Body of pancreas (tissue), 4 donors: ENCODE measurements at regions of chr16 and their contacts with region 1.

Region 1: DNA sequence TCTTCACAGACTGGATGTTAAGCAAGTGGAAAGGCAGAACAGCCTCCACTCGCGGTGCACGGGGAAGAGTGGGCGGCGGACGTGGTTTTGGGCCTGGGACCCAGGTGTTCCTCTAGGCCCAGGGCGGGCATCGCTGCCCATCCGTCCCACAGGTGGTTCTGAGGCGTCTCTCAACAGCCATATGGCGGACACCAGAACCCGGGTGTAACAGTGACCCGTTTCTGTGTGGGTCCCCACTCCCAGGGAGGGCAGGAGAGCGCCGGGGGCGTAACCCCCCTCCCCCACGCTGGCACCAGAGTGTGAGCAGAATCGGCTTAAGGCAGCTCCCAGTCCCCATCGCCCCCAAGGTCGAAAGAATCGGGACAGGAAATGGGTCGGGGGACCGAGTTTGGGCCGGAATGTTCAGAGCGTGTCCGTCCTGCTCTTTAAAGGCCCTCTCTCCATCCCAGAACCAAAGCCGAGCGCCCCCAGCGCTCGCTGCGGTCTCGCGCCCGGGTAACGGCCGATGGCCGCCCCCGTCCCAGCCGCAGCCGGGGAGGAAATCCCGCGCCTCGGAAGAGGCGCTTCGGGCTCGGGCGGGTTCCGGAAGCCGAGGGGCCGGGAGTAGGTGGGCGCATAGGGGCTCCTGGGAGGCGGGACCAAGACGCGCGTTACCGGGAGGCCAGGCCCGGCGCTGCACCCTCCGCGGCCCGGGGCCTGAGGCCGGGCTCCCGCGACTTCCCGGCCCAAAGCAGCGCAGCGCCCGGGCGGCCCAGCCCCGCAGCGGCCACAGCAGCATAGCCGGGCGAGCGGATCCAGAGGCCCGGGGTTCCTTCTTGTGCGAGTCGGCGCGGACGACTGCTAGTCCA is at the start of gene TK2:
- DNase-seq: peak; percentile 73 to 81 (median 77)
- ATAC-seq: peak; percentile 63
- H3K4me3 ChIP-seq: peak within 1 kb of the TSS; percentile 56 to 70
- H3K27ac ChIP-seq: peak within 1 kb of the TSS; percentile 72 to 98 (median 94)
- H3K4me1 ChIP-seq: peaks cover 47% of the 10 kb centered on the region
- H3K27me3 ChIP-seq: no peaks in the 10 kb centered on the region
- CTCF ChIP-seq: peak in 5 of 7 experiments; percentile 15 to 25 (median 18)
- POLR2A ChIP-seq: peak; percentile 80 to 83 (median 83)
- total RNA-seq, gene TK2: 23.1 to 26.0 TPM

Region 2: GRCh38 chr16:66399930-66400329 is 149.6 kb before region 1 on chr16:
- intact Hi-C with region 1: no loop called
- DNase-seq: no peak
- ATAC-seq: no peak
- H3K4me3 ChIP-seq: no peak overlapping the region
- H3K27ac ChIP-seq: no peak overlapping the region
- H3K4me1 ChIP-seq: no peaks in the 10 kb centered on the region
- H3K27me3 ChIP-seq: no peaks in the 10 kb centered on the region
- CTCF ChIP-seq: no peak
- POLR2A ChIP-seq: no peak

Region 3: DNA sequence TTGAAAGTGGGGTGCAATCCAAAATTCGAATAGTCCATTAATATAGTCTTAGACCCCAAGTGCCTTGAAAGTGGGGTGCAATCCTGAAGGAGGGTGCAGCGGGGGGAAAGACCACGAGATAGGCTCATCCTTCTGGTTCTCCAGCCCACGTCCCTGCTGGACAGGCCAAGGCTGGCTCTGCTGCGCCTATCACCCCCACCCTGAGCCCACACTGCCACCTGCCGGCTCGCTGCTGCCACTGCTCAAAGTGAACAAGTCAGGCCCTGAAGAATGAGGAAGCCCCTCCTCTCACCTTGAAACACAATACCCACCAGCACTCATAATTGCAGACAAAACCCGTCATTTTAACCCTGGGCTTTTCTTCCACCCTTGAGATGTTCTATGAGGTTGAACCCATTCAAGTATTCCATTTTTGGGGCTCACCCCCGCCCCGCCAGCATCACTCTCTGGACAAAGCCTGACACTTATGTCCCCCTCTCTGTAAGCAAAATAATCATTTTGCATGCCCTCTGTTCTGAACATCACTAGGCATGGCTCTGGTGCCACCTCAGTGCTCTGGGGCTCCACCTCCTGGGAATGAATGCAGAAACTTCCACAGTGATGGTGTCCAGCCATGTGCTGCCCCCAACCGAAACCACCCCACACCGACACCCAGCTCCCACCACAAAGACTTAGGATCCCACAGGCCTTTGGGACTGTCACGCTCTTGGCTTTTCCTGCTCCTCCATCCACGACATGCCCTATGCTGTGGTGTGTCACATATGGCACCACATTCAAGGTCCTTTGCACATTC is 65.6 kb before region 1 on chr16:
- intact Hi-C with region 1: loop called (anchors 10 kb)
- DNase-seq: peak; percentile 73 to 77 (median 74)
- ATAC-seq: peak; percentile 78
- H3K4me3 ChIP-seq: no peak overlapping the region
- H3K27ac ChIP-seq: no peak overlapping the region
- H3K4me1 ChIP-seq: peaks cover 11% of the 10 kb centered on the region
- H3K27me3 ChIP-seq: no peaks in the 10 kb centered on the region
- CTCF ChIP-seq: peak; percentile 83 to 94 (median 87)
- POLR2A ChIP-seq: no peak

Region 4: GRCh38 chr16:66495440-66495839 is 54.1 kb before region 1 on chr16:
- intact Hi-C with region 1: no loop called
- DNase-seq: no peak
- ATAC-seq: no peak
- H3K4me3 ChIP-seq: no peak overlapping the region
- H3K27ac ChIP-seq: no peak overlapping the region
- H3K4me1 ChIP-seq: no peaks in the 10 kb centered on the region
- H3K27me3 ChIP-seq: no peaks in the 10 kb centered on the region
- CTCF ChIP-seq: no peak
- POLR2A ChIP-seq: no peak

Region 5: GRCh38 chr16:67667817-67668494 is 1118.4 kb after region 1 on chr16:
- intact Hi-C with region 1: no loop called
- DNase-seq: peak; percentile 88 to 95 (median 93)
- ATAC-seq: peak; percentile 76
- H3K4me3 ChIP-seq: no peak overlapping the region
- H3K27ac ChIP-seq: peak overlapping the region; percentile 25 to 97 (median 90)
- H3K4me1 ChIP-seq: peaks cover 50% of the 10 kb centered on the region
- H3K27me3 ChIP-seq: no peaks in the 10 kb centered on the region
- CTCF ChIP-seq: peak; percentile 72 to 99 (median 98)
- POLR2A ChIP-seq: peak in 1 of 3 donors; percentile 20